ENCODE measurements at regions of chr2 and their contacts with region 1.

Region 1: DNA sequence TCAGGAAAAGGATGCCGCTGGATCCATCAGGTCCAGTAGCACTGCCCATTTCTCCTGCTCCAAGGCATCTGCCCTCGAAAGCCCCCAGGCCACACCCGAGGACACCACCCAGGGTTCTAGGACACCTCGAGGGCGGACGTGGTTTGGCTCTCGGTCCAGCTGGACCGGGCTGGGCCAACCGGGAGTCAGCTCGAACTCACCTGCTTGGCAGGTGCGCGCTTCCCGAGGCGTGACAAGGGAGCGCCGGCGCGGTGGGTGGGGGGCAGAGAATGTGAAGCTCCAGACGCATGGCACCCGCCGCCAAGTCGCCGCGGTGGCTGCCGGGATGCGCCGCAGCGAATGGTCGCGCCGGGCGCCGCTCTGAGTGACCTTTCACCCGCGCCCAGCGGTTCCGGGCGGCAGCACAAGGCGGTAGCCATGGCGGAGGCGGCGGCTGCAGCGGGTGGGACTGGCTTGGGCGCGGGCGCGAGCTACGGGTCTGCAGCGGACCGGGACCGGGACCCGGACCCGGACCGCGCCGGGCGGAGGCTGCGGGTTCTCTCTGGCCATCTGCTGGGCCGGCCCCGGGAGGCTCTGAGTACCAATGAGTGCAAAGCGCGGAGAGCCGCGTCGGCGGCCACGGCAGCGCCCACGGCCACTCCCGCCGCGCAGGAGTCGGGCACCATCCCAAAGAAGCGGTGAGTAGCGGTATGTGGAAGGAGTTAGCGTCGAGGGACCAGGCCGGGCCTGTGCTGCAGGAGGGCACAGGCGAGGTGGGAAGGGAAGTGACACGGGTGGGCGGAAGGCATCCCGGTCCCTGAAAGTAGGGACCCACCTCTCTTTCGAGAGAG is at the start of gene AGPS:
- DNase-seq: peak; percentile 61
- H3K4me3 ChIP-seq: peak within 1 kb of the TSS; percentile 66 to 73 (median 70)
- H3K27ac ChIP-seq: peak within 1 kb of the TSS; percentile 25
- H3K4me1 ChIP-seq: peaks cover 31% of the 10 kb centered on the region
- H3K27me3 ChIP-seq: no peaks in the 10 kb centered on the region
- CTCF ChIP-seq: peak; percentile 3 to 22
- total RNA-seq, gene AGPS: 42.8 to 52.4 TPM

Region 2: GRCh38 chr2:177281400-177282180 is 111.0 kb before region 1 on chr2:
- CTCF ChIA-PET with region 1: interaction called, 10 read pairs
- dilution Hi-C with region 1: no loop called
- in situ Hi-C with region 1: no loop called
- intact Hi-C with region 1: no loop called
- DNase-seq: peak; percentile 83
- H3K4me3 ChIP-seq: no peak overlapping the region
- H3K27ac ChIP-seq: no peak overlapping the region
- H3K4me1 ChIP-seq: peaks cover 27% of the 10 kb centered on the region
- H3K27me3 ChIP-seq: no peaks in the 10 kb centered on the region
- CTCF ChIP-seq: no peak

Region 3: GRCh38 chr2:177332041-177332991 is 60.3 kb before region 1 on chr2:
- CTCF ChIA-PET with region 1: no interaction called
- dilution Hi-C with region 1: no loop called
- in situ Hi-C with region 1: no loop called
- intact Hi-C with region 1: no loop called
- DNase-seq: peak; percentile 60
- H3K4me3 ChIP-seq: no peak overlapping the region
- H3K27ac ChIP-seq: no peak overlapping the region
- H3K4me1 ChIP-seq: peaks cover 10% of the 10 kb centered on the region
- H3K27me3 ChIP-seq: no peaks in the 10 kb centered on the region
- CTCF ChIP-seq: peak; percentile 59 to 67

Region 4: GRCh38 chr2:177348733-177349693 is 43.6 kb before region 1 on chr2:
- CTCF ChIA-PET with region 1: no interaction called
- dilution Hi-C with region 1: no loop called
- in situ Hi-C with region 1: loop called in 1 of 2 experiments (anchors 10 kb)
- intact Hi-C with region 1: no loop called
- DNase-seq: no peak
- H3K4me3 ChIP-seq: no peak overlapping the region
- H3K27ac ChIP-seq: no peak overlapping the region
- H3K4me1 ChIP-seq: peaks cover 13% of the 10 kb centered on the region
- H3K27me3 ChIP-seq: no peaks in the 10 kb centered on the region
- CTCF ChIP-seq: no peak

Measured in mammary epithelial cell (primary cell).